ENCODE measurements at regions of chr12 and their contacts with region 1.

Region 1: DNA sequence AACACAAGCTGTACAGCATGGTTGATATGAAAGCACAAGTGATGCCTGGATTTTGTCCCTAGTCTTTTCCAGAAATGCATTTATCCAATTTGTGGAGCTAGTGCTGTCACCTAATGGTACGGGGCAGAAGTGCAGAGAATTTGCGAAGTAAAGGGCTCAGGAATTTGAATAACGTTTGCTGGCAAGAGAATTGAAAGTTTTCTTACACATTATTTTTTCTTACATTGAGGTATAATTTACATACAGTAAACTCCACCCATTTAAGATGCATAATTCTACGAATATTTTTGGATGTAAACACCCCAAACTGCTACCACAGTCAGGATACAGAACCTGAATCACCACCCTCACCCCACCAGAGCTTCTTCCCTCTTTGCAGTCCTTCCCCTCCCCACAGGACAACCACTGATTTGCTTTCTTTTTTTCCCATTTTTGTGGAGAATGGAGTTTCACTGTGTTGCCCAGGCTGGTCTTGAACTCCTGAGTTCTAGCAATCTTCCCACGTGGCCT is 3.5 kb downstream of the AICDA start:
- DNase-seq: no peak
- H3K4me3 ChIP-seq: no peak overlapping the region
- H3K27ac ChIP-seq: no peak overlapping the region
- H3K4me1 ChIP-seq: no peaks in the 10 kb centered on the region
- H3K27me3 ChIP-seq: peaks cover 17% of the 10 kb centered on the region
- CTCF ChIP-seq: peak; percentile 78

Region 2: GRCh38 chr12:8420506-8420905 is 188.6 kb before region 1 on chr12:
- intact Hi-C with region 1: no loop called
- DNase-seq: no peak
- H3K4me3 ChIP-seq: no peak overlapping the region
- H3K27ac ChIP-seq: no peak overlapping the region
- H3K4me1 ChIP-seq: no peaks in the 10 kb centered on the region
- H3K27me3 ChIP-seq: no peaks in the 10 kb centered on the region
- CTCF ChIP-seq: no peak

Region 3: DNA sequence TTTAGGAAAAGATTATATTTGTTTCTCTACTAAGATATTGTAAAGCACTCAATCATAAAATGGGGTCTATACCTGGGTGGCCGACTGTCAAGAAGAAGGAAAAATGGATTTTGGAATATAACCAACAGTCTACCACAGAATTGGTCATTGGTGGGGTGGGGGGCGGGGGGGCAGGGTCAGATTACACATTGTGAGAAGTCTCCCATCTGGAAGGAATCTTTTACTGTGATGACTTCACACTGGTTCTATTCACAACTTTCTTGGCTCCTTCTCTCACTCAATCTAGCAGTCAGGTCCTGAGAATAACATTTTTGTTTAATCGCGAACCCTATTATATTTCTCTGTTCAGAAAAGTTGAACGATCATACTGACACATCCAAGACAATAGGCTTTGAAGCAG is 59.7 kb before region 1 on chr12:
- intact Hi-C with region 1: loop called (anchors 5 kb)
- DNase-seq: no peak
- H3K4me3 ChIP-seq: no peak overlapping the region
- H3K27ac ChIP-seq: no peak overlapping the region
- H3K4me1 ChIP-seq: peaks cover 2% of the 10 kb centered on the region
- H3K27me3 ChIP-seq: peaks cover 8% of the 10 kb centered on the region
- CTCF ChIP-seq: no peak

Region 4: GRCh38 chr12:8687846-8688601 is 78.9 kb after region 1 on chr12:
- intact Hi-C with region 1: no loop called
- DNase-seq: no peak
- H3K4me3 ChIP-seq: no peak overlapping the region
- H3K27ac ChIP-seq: peak overlapping the region; percentile 3
- H3K4me1 ChIP-seq: peaks cover 24% of the 10 kb centered on the region
- H3K27me3 ChIP-seq: no peaks in the 10 kb centered on the region
- CTCF ChIP-seq: no peak